Activated B cell treated with CpG ODN at 0.5 μM for 24 hours (primary cell): ENCODE measurements at regions of chr11 and their contacts with region 1.

Region 1: DNA sequence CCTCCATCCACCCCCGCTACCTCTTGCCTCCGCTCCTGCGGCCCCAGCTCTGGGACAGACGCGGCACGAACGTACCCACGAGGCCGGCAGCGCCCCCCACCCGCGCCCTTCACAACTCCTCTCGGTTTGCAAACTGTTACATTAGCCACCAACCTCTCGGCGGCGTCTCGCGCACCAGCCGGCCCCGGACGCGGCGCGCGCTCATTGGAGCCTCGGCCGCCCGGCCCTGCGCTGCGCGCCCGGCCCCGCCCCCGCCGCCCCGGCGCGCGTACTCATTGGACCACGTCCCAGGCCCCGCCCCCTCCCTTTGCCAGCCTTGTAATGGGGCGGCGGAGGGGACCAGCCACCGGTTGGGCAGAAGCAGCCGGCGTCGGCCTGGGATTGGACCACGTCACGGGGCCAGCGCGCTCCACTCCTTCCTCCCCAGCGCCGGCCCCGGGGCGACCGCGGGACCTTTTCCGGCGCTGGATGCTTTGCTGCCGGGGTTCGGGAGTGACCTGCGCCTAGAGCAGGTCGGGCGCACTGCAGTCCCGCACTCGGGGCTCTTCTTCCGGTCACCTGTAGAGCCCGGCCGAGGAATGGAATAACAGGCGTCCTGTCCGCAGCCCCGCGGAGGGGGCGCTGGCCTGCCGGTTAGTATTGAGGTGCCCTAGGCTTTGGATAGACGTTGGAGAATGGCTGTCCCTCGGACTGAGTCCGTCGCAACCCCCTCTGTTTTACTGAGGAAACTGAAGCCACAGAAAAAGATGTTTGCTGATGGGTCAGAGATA is at the start of gene HYOU1:
- DNase-seq: peak; percentile 97
- ATAC-seq: peak; percentile 94
- H3K4me3 Mint-ChIP-seq: peak within 1 kb of the TSS; percentile 96
- H3K27ac Mint-ChIP-seq: peak within 1 kb of the TSS; percentile 95
- H3K4me1 Mint-ChIP-seq: peaks cover 40% of the 10 kb centered on the region
- H3K27me3 Mint-ChIP-seq: no peaks in the 10 kb centered on the region
- CTCF ChIP-seq: no peak
- total RNA-seq, gene HYOU1: 120 and 122 TPM in 2 replicates

Region 2: GRCh38 chr11:118948000-118948399 is 109.2 kb before region 1 on chr11:
- CTCF ChIA-PET with region 1: no interaction called
- POLR2A ChIA-PET with region 1: no interaction called
- intact Hi-C with region 1: no loop called
- DNase-seq: no peak
- ATAC-seq: no peak
- H3K4me3 Mint-ChIP-seq: no peak overlapping the region
- H3K27ac Mint-ChIP-seq: no peak overlapping the region
- H3K4me1 Mint-ChIP-seq: no peaks in the 10 kb centered on the region
- H3K27me3 Mint-ChIP-seq: peaks cover 17% of the 10 kb centered on the region
- CTCF ChIP-seq: no peak

Region 3: GRCh38 chr11:119012629-119013170 is 44.5 kb before region 1 on chr11:
- CTCF ChIA-PET with region 1: no interaction called
- POLR2A ChIA-PET with region 1: interaction called, 26 read pairs
- intact Hi-C with region 1: no loop called
- DNase-seq: no peak
- ATAC-seq: no peak
- H3K4me3 Mint-ChIP-seq: no peak overlapping the region
- H3K27ac Mint-ChIP-seq: no peak overlapping the region
- H3K4me1 Mint-ChIP-seq: peaks cover 28% of the 10 kb centered on the region
- H3K27me3 Mint-ChIP-seq: no peaks in the 10 kb centered on the region
- CTCF ChIP-seq: no peak

Region 4: GRCh38 chr11:119018074-119018938 is 38.9 kb before region 1 on chr11 and contains the starts of genes RPS25 and TRAPPC4:
- CTCF ChIA-PET with region 1: no interaction called
- POLR2A ChIA-PET with region 1: interaction called, 26 read pairs
- intact Hi-C with region 1: loop called (anchors 1 kb)
- DNase-seq: peak; percentile 90
- ATAC-seq: peak; percentile 87
- H3K4me3 Mint-ChIP-seq: peak within 1 kb of the TSS; percentile 99
- H3K27ac Mint-ChIP-seq: peak within 1 kb of the TSS; percentile 100
- H3K4me1 Mint-ChIP-seq: peaks cover 54% of the 10 kb centered on the region
- H3K27me3 Mint-ChIP-seq: no peaks in the 10 kb centered on the region
- CTCF ChIP-seq: no peak
- total RNA-seq, gene RPS25: 2,191 and 2,534 TPM in 2 replicates
- total RNA-seq, gene TRAPPC4: 56.8 and 60.1 TPM in 2 replicates